Activated CD4-positive, alpha-beta memory T cell treated with anti-CD3 and anti-CD28 coated beads, Interleukin-2, amount 10 ng/mL, durations not matched to agents 7 days and 5 days (primary cell): ENCODE measurements at regions of chr1 and their contacts with region 1.

Region 1: GRCh38 chr1:155934097-155934935 is at the start of gene KHDC4:
- DNase-seq: peak; percentile 97
- H3K4me3 Mint-ChIP-seq: no peak within 1 kb of the TSS
- H3K27ac Mint-ChIP-seq: no peak within 1 kb of the TSS
- H3K4me1 Mint-ChIP-seq: peaks cover 45% of the 10 kb centered on the region
- H3K27me3 Mint-ChIP-seq: no peaks in the 10 kb centered on the region
- total RNA-seq, gene KHDC4: 63.8 to 71.4 TPM

Region 2: GRCh38 chr1:155847823-155848529 is 86.3 kb before region 1 on chr1:
- CTCF ChIA-PET with region 1: no interaction called
- POLR2A ChIA-PET with region 1: no interaction called
- DNase-seq: peak; percentile 21
- H3K4me3 Mint-ChIP-seq: peak overlapping the region; percentile 28
- H3K27ac Mint-ChIP-seq: peak overlapping the region; percentile 64
- H3K4me1 Mint-ChIP-seq: peaks cover 59% of the 10 kb centered on the region
- H3K27me3 Mint-ChIP-seq: no peaks in the 10 kb centered on the region

Region 3: DNA sequence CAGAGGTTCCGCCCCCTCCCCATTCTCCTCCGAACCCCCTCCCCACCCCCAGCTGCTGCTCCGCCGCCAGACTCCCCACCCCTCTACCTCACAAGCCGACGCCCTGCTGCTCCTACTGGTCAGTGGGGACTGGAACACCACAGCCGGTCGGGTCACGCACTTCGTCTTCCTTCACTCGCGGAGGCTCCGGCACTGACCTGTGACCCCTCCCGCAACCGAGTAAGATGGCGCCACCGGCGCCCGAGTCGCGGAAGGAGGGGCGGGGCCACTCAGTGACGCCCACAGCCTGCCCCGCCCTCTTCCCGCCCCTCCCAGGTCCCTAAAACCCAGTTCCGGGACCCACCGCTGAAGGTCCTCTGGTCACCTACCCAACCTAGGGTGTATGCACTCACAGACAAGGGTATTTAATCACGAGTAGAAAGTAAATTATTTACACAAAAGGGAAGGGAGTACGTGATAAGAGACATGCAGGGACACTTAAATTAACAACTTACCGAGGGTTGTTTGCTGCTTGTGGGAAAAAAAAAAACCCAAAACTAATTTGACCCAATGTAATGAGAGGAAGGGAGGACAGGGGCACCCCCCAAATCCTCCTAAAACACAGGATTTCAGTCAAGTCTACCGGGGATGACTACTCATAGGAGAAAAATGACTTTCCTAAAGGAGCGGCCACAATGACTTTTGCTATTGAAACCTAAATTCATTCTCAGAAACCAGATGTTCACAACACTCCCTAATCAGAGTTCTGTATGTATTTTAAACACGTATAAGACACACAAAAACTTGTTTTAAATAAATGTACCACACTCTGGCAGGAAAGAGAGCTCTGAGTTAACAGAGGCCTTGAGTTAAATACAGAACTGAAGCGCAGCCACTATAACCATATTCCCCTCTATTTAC is 22.9 kb before region 1 on chr1 and contains the start of gene RIT1:
- CTCF ChIA-PET with region 1: interaction called, 4 read pairs
- POLR2A ChIA-PET with region 1: interaction called, 14 read pairs
- DNase-seq: peak; percentile 90
- H3K4me3 Mint-ChIP-seq: peak within 1 kb of the TSS; percentile 98
- H3K27ac Mint-ChIP-seq: peak within 1 kb of the TSS; percentile 97
- H3K4me1 Mint-ChIP-seq: peaks cover 29% of the 10 kb centered on the region
- H3K27me3 Mint-ChIP-seq: no peaks in the 10 kb centered on the region
- total RNA-seq, gene RIT1: 25.0 to 30.9 TPM

Region 4: GRCh38 chr1:155967341-155968050 is 33.2 kb after region 1 on chr1:
- CTCF ChIA-PET with region 1: interaction called, 7 read pairs
- POLR2A ChIA-PET with region 1: interaction called, 14 read pairs
- DNase-seq: no peak
- H3K4me3 Mint-ChIP-seq: peak overlapping the region; percentile 24
- H3K27ac Mint-ChIP-seq: peak overlapping the region; percentile 87
- H3K4me1 Mint-ChIP-seq: peaks cover 82% of the 10 kb centered on the region
- H3K27me3 Mint-ChIP-seq: no peaks in the 10 kb centered on the region

Region 5: GRCh38 chr1:155989242-155990004 is 55.1 kb after region 1 on chr1:
- CTCF ChIA-PET with region 1: interaction called, 65 read pairs
- POLR2A ChIA-PET with region 1: interaction called, 25 read pairs
- DNase-seq: peak; percentile 85
- H3K4me3 Mint-ChIP-seq: no peak overlapping the region
- H3K27ac Mint-ChIP-seq: no peak overlapping the region
- H3K4me1 Mint-ChIP-seq: peaks cover 23% of the 10 kb centered on the region
- H3K27me3 Mint-ChIP-seq: no peaks in the 10 kb centered on the region

Region 6: DNA sequence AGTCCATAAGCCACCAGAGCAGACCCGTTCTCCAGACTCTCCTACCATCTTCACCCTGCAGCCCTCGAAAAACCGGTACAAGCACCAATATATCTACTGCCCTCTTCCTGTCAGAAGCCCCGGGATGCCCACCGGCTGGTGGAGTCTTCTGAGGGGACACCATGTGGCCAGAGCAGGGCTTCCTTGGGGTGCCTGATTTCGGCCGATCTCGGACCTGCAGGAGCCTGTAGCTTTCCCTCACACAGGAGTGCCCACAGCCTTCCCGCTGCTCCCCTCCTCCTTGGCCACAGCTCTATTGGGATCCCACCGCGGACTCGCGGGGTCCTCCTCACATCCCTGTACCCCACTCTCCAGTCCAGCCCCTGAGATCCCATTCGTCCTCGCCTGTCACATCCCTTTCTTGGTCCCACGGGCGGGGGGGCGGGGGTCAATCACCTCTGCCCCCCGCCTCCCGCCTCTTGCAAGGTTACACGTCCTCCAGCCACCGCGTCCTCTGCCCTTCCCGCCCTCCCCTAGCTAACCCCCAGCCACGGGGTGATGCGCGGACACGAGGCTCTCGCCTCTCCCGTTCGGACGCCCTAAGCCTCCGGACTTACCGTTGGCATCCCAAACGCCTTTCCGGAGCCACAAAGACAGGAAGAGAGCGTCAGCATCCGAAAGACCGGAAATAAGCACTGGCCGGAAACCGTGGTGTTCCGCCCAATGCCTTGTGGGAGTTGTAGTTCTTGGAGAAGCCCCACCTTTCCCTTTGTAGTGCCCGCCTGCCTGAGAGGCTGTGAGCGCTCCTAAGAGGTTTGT is 86.2 kb after region 1 on chr1 and contains the start of gene SSR2:
- CTCF ChIA-PET with region 1: interaction called, 3 read pairs
- POLR2A ChIA-PET with region 1: interaction called, 11 read pairs
- DNase-seq: peak; percentile 91
- H3K4me3 Mint-ChIP-seq: peak within 1 kb of the TSS; percentile 86
- H3K27ac Mint-ChIP-seq: peak within 1 kb of the TSS; percentile 93
- H3K4me1 Mint-ChIP-seq: peaks cover 37% of the 10 kb centered on the region
- H3K27me3 Mint-ChIP-seq: peaks cover 4% of the 10 kb centered on the region
- total RNA-seq, gene SSR2: 262 to 268 TPM